Natural killer cell (primary cell): ENCODE measurements at regions of chr16 and their contacts with region 1.

Region 1: GRCh38 chr16:81841722-81842121 is 62.6 kb downstream of the PLCG2 start:
- DNase-seq: peak; percentile 60 to 73
- ATAC-seq: peak; percentile 75 to 88 (median 87)
- H3K4me3 ChIP-seq: peak overlapping the region; percentile 34
- H3K4me3 Mint-ChIP-seq: peak overlapping the region; percentile 79
- H3K27ac ChIP-seq: peak overlapping the region; percentile 90
- H3K27ac Mint-ChIP-seq: peak overlapping the region; percentile 91 to 95
- H3K4me1 ChIP-seq: peaks cover 78% of the 10 kb centered on the region
- H3K4me1 Mint-ChIP-seq: peaks cover 64 to 72% of the 10 kb centered on the region in 2 donors
- H3K27me3 ChIP-seq: no peaks in the 10 kb centered on the region
- H3K27me3 Mint-ChIP-seq: no peaks in the 10 kb centered on the region
- CTCF ChIP-seq: no peak

Region 2: GRCh38 chr16:81810894-81811538 is 30.7 kb before region 1 on chr16:
- intact Hi-C with region 1: loop called (anchors 2 kb)
- DNase-seq: no peak
- ATAC-seq: peak; percentile 19 to 48 (median 41)
- H3K4me3 ChIP-seq: no peak overlapping the region
- H3K4me3 Mint-ChIP-seq: peak overlapping the region; percentile 86
- H3K27ac ChIP-seq: peak overlapping the region; percentile 86
- H3K27ac Mint-ChIP-seq: peak overlapping the region; percentile 98 to 99
- H3K4me1 ChIP-seq: peaks cover 80% of the 10 kb centered on the region
- H3K4me1 Mint-ChIP-seq: peaks cover 92 to 94% of the 10 kb centered on the region in 2 donors
- H3K27me3 ChIP-seq: no peaks in the 10 kb centered on the region
- H3K27me3 Mint-ChIP-seq: no peaks in the 10 kb centered on the region
- CTCF ChIP-seq: no peak

Region 3: GRCh38 chr16:81817789-81818567 is 23.7 kb before region 1 on chr16:
- intact Hi-C with region 1: loop called (anchors 1 kb)
- DNase-seq: peak; percentile 68 to 69
- ATAC-seq: peak; percentile 67 to 90 (median 79)
- H3K4me3 ChIP-seq: no peak overlapping the region
- H3K4me3 Mint-ChIP-seq: peak overlapping the region; percentile 82
- H3K27ac ChIP-seq: peak overlapping the region; percentile 99
- H3K27ac Mint-ChIP-seq: peak overlapping the region; percentile 98 to 99
- H3K4me1 ChIP-seq: peaks cover 97% of the 10 kb centered on the region
- H3K4me1 Mint-ChIP-seq: peaks cover 76 to 80% of the 10 kb centered on the region in 2 donors
- H3K27me3 ChIP-seq: no peaks in the 10 kb centered on the region
- H3K27me3 Mint-ChIP-seq: no peaks in the 10 kb centered on the region
- CTCF ChIP-seq: no peak

Region 4: DNA sequence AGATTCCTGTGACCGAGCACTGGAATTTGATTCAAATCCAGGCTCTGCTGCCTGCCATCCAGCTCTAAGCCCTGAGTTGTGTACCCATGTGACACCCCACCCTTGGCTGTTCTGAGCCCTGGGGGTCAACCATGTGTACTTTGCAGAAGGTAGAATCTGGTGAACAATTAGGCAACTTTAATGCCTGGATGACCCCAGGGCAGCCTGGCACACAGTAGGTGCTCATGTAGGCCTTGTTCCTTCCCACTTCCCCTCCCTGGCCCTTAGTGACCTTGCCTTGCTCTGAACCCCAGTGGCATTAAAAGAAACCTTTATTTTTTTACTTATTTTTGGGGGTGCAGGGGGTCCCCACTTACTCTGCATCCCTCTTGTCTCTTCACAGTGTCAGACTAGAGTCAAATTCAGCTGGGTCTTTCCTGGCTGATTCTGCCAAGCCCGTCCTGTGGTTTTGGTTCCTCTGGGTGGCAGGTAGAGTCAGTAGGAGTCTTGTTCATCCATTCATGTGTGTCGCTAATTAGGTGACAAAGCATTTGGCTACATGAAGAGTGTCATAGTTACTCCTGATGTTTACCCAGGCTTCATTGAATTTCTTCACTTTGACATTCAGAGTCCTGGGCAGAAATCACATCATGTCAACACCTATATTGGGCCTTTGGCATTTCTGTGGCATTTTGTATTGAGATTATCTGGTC is 26.5 kb after region 1 on chr16:
- intact Hi-C with region 1: loop called (anchors 2 kb)
- DNase-seq: no peak
- ATAC-seq: no peak
- H3K4me3 ChIP-seq: no peak overlapping the region
- H3K4me3 Mint-ChIP-seq: no peak overlapping the region
- H3K27ac ChIP-seq: no peak overlapping the region
- H3K27ac Mint-ChIP-seq: peak overlapping the region; percentile 75 to 77
- H3K4me1 ChIP-seq: peaks cover 39% of the 10 kb centered on the region
- H3K4me1 Mint-ChIP-seq: peaks cover 46 to 73% of the 10 kb centered on the region in 2 donors
- H3K27me3 ChIP-seq: no peaks in the 10 kb centered on the region
- H3K27me3 Mint-ChIP-seq: no peaks in the 10 kb centered on the region
- CTCF ChIP-seq: no peak

Region 5: GRCh38 chr16:81896900-81897299 is 55.2 kb after region 1 on chr16:
- intact Hi-C with region 1: no loop called
- DNase-seq: no peak
- ATAC-seq: no peak
- H3K4me3 ChIP-seq: no peak overlapping the region
- H3K4me3 Mint-ChIP-seq: no peak overlapping the region
- H3K27ac ChIP-seq: no peak overlapping the region
- H3K27ac Mint-ChIP-seq: peak overlapping the region in 1 of 2 donors; percentile 24
- H3K4me1 ChIP-seq: no peaks in the 10 kb centered on the region
- H3K4me1 Mint-ChIP-seq: peaks cover 0 to 3% of the 10 kb centered on the region in 2 donors
- H3K27me3 ChIP-seq: no peaks in the 10 kb centered on the region
- H3K27me3 Mint-ChIP-seq: no peaks in the 10 kb centered on the region
- CTCF ChIP-seq: no peak